ENCODE measurements at regions of chr7 and their contacts with region 1.

Region 1: GRCh38 chr7:43834463-43835251 is 34.7 kb downstream of the MRPS24 start:
- H3K4me3 ChIP-seq: no peak overlapping the region
- H3K27ac ChIP-seq: no peak overlapping the region
- H3K4me1 ChIP-seq: no peaks in the 10 kb centered on the region; the same call in 1 of the 2 replicates
- CTCF ChIP-seq: no peak

Region 2: DNA sequence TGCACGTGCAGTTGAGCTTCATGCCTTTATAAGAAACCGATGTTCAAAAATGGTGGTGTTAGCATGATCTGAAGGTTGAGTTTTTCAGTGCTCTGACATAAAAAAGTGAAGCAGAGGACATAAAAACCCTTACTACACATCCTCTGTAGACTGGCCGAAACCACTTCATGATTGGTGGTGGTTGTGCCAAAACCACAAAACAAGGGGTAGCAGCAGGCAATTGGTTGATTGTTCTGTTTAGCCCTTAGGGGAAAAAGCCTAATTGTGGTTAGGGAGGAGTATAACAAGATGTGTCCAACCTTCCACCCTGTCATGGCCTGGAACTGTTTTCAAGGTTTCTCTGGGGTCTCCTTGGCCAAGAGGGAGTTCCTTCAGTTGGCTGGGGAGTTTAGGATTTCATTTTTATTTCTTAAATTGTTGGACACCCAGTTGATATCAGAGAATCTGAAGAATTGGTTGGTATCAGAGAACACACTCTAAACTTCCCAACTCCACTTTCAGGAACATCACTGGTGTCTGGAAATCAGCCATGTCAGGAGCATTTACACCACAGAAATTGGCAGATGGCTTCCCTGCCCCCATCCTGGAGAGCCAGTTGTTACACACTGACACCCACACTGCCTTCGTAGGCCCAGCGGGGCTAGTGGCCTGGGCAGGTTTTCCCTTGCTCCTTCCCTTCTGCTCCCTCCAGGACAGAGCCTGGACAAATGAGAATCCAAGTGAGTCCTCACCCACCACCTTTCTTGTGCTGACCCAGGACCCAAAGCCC is 15.9 kb after region 1 on chr7:
- CTCF ChIA-PET with region 1: interaction called, 17 read pairs
- POLR2A ChIA-PET with region 1: no interaction called
- H3K4me3 ChIP-seq: no peak overlapping the region
- H3K27ac ChIP-seq: no peak overlapping the region
- H3K4me1 ChIP-seq: no peaks in the 10 kb centered on the region
- CTCF ChIP-seq: no peak

Region 3: GRCh38 chr7:43856996-43857395 is 22.3 kb after region 1 on chr7:
- CTCF ChIA-PET with region 1: interaction called, 17 read pairs
- POLR2A ChIA-PET with region 1: no interaction called
- H3K4me3 ChIP-seq: no peak overlapping the region
- H3K27ac ChIP-seq: no peak overlapping the region
- H3K4me1 ChIP-seq: no peaks in the 10 kb centered on the region
- CTCF ChIP-seq: no peak

Region 4: DNA sequence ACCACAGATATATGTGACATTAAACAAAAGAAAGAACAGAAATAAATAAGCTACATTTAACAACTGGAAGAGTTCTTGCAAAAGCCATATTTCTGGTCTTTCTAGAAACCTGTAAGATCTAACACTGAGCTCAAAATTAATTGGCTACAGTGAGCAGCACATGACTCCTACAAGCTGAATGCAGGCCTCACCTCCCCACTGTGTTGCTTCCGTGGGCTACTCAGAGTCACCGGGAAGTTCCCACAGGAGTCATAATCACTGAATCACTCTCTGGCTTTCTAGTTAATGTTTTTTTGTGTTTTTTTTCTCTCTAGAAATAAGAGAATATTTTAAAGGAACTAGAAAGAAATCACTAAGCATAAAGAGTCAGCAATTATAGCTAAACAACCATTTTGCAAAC is 44.8 kb after region 1 on chr7:
- CTCF ChIA-PET with region 1: no interaction called
- POLR2A ChIA-PET with region 1: no interaction called
- H3K4me3 ChIP-seq: no peak overlapping the region
- H3K27ac ChIP-seq: no peak overlapping the region
- H3K4me1 ChIP-seq: no peaks in the 10 kb centered on the region
- CTCF ChIP-seq: no peak

Region 5: GRCh38 chr7:43931346-43931745 is 96.7 kb after region 1 on chr7:
- CTCF ChIA-PET with region 1: no interaction called
- POLR2A ChIA-PET with region 1: no interaction called
- H3K4me3 ChIP-seq: no peak overlapping the region
- H3K27ac ChIP-seq: no peak overlapping the region
- H3K4me1 ChIP-seq: no peaks in the 10 kb centered on the region
- CTCF ChIP-seq: no peak

Region 6: DNA sequence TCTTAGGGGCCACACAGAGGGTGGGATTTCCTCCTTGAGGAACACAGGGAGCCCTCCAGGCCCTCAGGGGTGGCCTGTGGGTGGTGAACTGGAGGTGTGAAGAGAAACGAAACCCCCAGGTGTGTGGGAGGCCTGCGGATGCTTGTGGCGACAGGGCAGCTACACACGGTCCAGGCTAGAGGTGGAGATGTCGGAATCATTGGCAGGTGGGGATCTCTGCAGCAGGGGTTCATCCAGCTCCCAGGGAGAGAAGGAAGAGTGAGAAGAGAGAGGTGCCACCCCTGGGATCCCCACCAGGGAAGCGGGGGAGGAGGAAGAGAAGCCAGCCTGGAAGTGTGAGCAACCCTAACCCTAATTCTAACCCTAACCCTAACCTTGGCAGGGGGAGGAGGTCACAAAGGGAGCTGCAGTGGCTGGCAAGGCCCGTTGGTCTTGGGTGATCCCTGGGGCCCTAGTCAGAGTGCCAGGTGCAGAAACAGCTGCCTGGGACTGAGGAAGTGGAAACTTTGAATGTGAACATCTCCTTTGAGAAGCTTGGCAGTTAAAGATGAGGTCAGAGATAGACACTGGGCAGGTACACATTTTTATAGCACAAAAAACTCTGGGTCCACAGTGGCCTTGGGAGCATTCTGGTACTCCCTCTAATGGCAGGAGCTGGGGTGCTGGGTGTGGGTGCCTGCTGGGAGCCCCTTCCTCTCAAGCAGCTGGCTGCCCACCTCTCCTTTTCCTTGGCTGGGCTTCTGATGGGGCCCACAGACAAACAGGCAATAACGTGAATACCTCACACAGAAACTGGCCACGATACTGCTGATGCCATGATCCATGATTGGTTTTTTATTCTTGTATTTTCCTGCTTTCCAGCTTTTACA is 262.6 kb after region 1 on chr7:
- CTCF ChIA-PET with region 1: no interaction called
- POLR2A ChIA-PET with region 1: no interaction called
- H3K4me3 ChIP-seq: no peak overlapping the region
- H3K27ac ChIP-seq: no peak overlapping the region
- H3K4me1 ChIP-seq: no peaks in the 10 kb centered on the region; the same call in 1 of the 2 replicates
- CTCF ChIP-seq: no peak